A549 (cell line): ENCODE measurements at regions of chr6 and their contacts with region 1.

Region 1: GRCh38 chr6:34414999-34415858 is 10.6 kb downstream of the RPS10 start:
- DNase-seq: peak in 1 of 2 experiments; percentile 76
- ATAC-seq: peak; percentile 81 to 87
- H3K4me3 ChIP-seq: no peak overlapping the region
- H3K27ac ChIP-seq: peak overlapping the region in 1 of 2 experiments; percentile 35; a peak in 1 of 6 replicates
- H3K4me1 ChIP-seq: peaks cover 28% of the 10 kb centered on the region; the same call in 2 of the 3 replicates
- CTCF ChIP-seq: peak; percentile 58
- EP300 ChIP-seq: no peak
- POLR2A ChIP-seq: no peak
- RAD21 ChIP-seq: peak; percentile 60 to 64

Region 2: DNA sequence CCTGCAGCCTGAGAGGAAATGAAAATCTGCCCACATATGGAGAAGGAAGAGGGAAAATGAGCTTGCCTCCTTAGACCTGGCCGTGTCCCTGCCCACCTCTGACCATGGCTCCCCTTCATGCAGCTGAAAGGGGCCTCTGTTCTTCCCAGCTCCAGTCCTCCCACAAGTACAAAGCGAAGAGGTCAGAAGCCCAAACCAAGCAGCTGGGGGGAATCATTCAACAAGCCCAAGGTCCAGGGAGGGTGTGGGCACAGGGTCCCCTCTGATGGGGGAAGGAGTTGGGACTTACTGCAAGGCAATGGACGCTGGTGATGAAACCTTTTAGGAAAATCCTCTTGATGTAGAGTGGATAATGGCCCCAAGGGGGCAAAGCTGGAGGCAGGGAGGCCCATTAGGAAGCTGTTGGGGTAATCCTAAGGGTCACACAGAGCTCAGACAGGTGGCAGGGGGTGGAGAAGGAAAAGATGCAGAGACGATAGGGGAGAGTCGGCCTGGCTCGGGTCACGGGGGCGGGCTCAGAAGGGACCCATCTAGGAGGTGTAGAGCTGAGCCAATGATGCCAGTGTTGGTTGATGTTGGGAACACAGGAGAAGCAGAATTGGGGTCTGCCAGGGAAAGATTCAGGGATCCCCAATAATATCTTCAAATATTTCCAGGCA is 253.2 kb before region 1 on chr6:
- CTCF ChIA-PET with region 1: interaction called, 25 read pairs
- POLR2A ChIA-PET with region 1: no interaction called
- DNase-seq: no peak
- ATAC-seq: no peak
- H3K4me3 ChIP-seq: no peak overlapping the region
- H3K27ac ChIP-seq: no peak overlapping the region
- H3K4me1 ChIP-seq: no peaks in the 10 kb centered on the region
- CTCF ChIP-seq: no peak
- EP300 ChIP-seq: no peak
- POLR2A ChIP-seq: no peak
- RAD21 ChIP-seq: no peak

Region 3: GRCh38 chr6:34248727-34249551 is 166.3 kb before region 1 on chr6 and contains the start of gene SMIM29:
- CTCF ChIA-PET with region 1: interaction called, 37 read pairs
- POLR2A ChIA-PET with region 1: interaction called, 22 read pairs
- DNase-seq: peak; percentile 74 to 90
- ATAC-seq: peak; percentile 64 to 76
- H3K4me3 ChIP-seq: peak within 1 kb of the TSS; percentile 76
- H3K27ac ChIP-seq: peak within 1 kb of the TSS; percentile 92 to 93
- H3K4me1 ChIP-seq: peaks cover 41% of the 10 kb centered on the region
- CTCF ChIP-seq: peak; percentile 70
- EP300 ChIP-seq: no peak
- POLR2A ChIP-seq: peak; percentile 47
- RAD21 ChIP-seq: peak; percentile 58 to 88
- polyA plus RNA-seq, gene SMIM29: 8.1 and 11.0 TPM in 2 replicates

Region 4: GRCh38 chr6:34392497-34393190 is 22.6 kb before region 1 on chr6 and contains the start of gene NUDT3:
- CTCF ChIA-PET with region 1: interaction called, 10 read pairs
- POLR2A ChIA-PET with region 1: no interaction called
- DNase-seq: peak; percentile 70 to 91
- ATAC-seq: peak; percentile 90 to 93
- H3K4me3 ChIP-seq: peak within 1 kb of the TSS; percentile 84
- H3K27ac ChIP-seq: peak within 1 kb of the TSS; percentile 95 to 99
- H3K4me1 ChIP-seq: peaks cover 15% of the 10 kb centered on the region
- CTCF ChIP-seq: peak; percentile 46; the same call in 2 of the 3 replicates
- EP300 ChIP-seq: no peak
- POLR2A ChIP-seq: peak; percentile 74
- RAD21 ChIP-seq: peak; percentile 46 to 66
- polyA plus RNA-seq, gene NUDT3: 12.9 and 13.4 TPM in 2 replicates

Region 5: GRCh38 chr6:34425498-34426410 is 10.5 kb after region 1 on chr6 and contains the start of gene RPS10:
- CTCF ChIA-PET with region 1: interaction called, 13 read pairs
- POLR2A ChIA-PET with region 1: interaction called, 12 read pairs
- DNase-seq: peak; percentile 83 to 90
- ATAC-seq: peak; percentile 92 to 98
- H3K4me3 ChIP-seq: peak within 1 kb of the TSS; percentile 97
- H3K27ac ChIP-seq: peak within 1 kb of the TSS; percentile 92 to 94
- H3K4me1 ChIP-seq: peaks cover 24% of the 10 kb centered on the region
- CTCF ChIP-seq: no peak
- EP300 ChIP-seq: no peak
- POLR2A ChIP-seq: peak; percentile 83
- RAD21 ChIP-seq: no peak
- polyA plus RNA-seq, gene RPS10: 1,532 and 2,051 TPM in 2 replicates